Breast epithelium (tissue), 4 donors: ENCODE measurements at regions of chr17 and their contacts with region 1.

Region 1: GRCh38 chr17:50213026-50214022 is 11.9 kb upstream of the COL1A1 start:
- DNase-seq: no peak
- H3K4me3 ChIP-seq: no peak overlapping the region
- H3K27ac ChIP-seq: no peak overlapping the region
- H3K4me1 ChIP-seq: peaks cover 0 to 7% of the 10 kb centered on the region in 2 donors
- H3K27me3 ChIP-seq: no peaks in the 10 kb centered on the region
- CTCF ChIP-seq: no peak
- POLR2A ChIP-seq: no peak

Region 2: DNA sequence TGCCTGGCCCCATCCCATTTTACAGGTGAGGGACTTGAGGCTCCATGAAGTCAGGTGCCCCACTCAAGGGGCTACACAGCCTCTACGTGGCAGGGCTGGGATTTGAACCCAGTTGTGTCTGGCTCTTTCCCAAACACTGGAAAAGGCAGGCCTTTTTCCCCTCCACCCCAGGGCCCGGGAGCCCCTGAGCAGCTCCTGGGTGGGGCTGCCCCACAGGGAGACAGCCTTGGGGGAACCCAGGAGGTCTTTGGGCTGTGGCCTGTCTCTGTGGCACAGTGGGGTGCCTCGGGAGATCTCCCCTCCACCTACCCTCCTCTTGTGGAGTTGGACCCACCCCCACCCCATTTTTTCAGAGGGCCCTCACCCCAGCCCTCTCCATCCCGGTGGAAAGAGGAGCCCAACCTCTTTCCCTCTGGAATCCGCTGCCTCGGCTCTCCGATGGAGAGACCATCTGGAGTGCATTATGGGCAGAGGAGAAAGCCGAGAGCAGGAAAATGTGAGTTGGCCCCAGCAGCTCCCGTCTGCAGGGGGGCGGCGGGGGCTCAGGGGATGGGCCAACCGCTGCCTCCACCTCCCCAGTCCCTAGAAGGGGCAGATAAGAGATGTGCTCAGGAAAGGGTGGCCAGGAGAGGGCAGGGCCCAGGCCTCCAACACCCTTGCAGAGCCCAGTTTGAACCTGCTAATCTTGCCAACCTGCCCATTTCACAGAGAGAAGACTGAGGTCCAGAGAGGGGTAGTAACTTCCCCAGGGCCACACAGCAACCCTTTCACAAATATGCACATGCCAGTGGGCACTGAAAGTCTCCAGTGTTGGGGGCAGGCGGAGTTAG is 45.5 kb after region 1 on chr17:
- intact Hi-C with region 1: loop called (anchors 1 kb)
- DNase-seq: peak in 1 of 2 donors; percentile 41
- H3K4me3 ChIP-seq: no peak overlapping the region
- H3K27ac ChIP-seq: peak overlapping the region; percentile 62 to 88
- H3K4me1 ChIP-seq: no peaks in the 10 kb centered on the region
- H3K27me3 ChIP-seq: no peaks in the 10 kb centered on the region
- CTCF ChIP-seq: no peak
- POLR2A ChIP-seq: no peak

Region 3: DNA sequence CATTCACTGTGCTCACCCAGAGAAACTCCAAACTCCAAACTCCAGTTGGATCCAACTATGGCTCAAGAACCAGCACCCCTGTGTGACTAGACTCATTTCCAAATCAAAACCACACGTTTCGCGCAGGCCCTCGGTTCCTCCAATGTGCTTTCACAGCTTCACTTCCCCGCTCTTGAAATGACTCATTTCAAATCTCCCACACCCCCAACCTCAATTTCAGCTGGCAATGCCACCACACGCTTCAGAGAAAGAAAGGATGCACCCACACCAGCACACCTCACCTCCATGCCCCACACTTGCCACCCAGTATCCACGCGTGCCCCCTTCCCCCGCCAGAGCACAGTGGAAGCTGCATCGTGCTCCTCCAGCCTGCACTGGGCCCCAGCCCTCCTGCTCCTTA is 69.9 kb after region 1 on chr17:
- intact Hi-C with region 1: loop called (anchors 5 kb)
- DNase-seq: no peak
- H3K4me3 ChIP-seq: no peak overlapping the region
- H3K27ac ChIP-seq: no peak overlapping the region
- H3K4me1 ChIP-seq: no peaks in the 10 kb centered on the region
- H3K27me3 ChIP-seq: no peaks in the 10 kb centered on the region
- CTCF ChIP-seq: no peak
- POLR2A ChIP-seq: no peak

Region 4: GRCh38 chr17:50660042-50660847 is 446.9 kb after region 1 on chr17:
- intact Hi-C with region 1: no loop called
- DNase-seq: peak in 1 of 2 donors; percentile 70
- H3K4me3 ChIP-seq: peak overlapping the region in 1 of 3 donors; percentile 18
- H3K27ac ChIP-seq: peak overlapping the region; percentile 77 to 83
- H3K4me1 ChIP-seq: peaks cover 10 to 20% of the 10 kb centered on the region in 2 donors
- H3K27me3 ChIP-seq: no peaks in the 10 kb centered on the region
- CTCF ChIP-seq: no peak
- POLR2A ChIP-seq: no peak